ENCODE measurements at regions of chr19 and their contacts with region 1.

Region 1: DNA sequence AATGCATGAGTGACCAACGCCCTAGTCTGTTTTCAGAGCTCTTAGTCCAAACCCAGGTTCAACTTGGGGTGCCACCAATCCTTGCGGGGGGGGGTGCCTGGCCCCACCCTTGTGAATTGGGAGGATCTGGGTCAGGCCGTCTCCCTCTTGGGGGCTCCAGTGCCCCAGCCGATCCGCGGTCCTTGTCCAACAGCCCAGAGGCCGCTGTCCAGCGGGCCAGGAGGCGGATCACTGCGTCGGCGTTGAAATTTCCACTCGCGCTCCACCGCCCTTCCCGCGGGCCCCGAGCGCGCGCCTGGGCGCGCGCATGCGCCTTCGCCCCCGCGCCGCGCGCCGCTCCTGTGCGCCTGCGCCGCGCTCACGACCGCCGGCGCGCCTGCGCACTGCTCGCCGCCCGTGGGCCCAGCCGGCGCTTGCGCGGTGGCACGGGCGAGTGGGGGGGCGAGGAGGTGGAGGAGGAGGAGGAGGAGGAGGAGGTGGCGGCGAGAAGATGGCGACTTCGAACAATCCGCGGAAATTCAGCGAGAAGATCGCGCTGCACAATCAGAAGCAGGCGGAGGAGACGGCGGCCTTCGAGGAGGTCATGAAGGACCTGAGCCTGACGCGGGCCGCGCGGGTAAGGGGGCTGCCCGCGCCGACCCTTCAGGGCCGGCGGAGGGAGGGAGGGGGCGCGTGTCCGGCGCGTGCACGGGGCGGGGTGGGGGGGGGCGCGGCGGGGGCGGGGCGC is at the start of gene CRTC1:
- DNase-seq: peak; percentile 91 to 94
- ATAC-seq: peak; percentile 86 to 92 (median 90)
- H3K4me3 ChIP-seq: peak within 1 kb of the TSS; percentile 44 to 66 (median 57)
- H3K27ac ChIP-seq: peak within 1 kb of the TSS; percentile 44 to 90 (median 85)
- H3K4me1 ChIP-seq: peaks cover 7 to 37% (median 14%) of the 10 kb centered on the region in 9 donors
- H3K27me3 ChIP-seq: no peaks in the 10 kb centered on the region
- CTCF ChIP-seq: peak in 2 of 9 donors; percentile 16 to 23
- total RNA-seq, gene CRTC1: 6.5 to 11.8 (median 9.3) TPM

Region 2: DNA sequence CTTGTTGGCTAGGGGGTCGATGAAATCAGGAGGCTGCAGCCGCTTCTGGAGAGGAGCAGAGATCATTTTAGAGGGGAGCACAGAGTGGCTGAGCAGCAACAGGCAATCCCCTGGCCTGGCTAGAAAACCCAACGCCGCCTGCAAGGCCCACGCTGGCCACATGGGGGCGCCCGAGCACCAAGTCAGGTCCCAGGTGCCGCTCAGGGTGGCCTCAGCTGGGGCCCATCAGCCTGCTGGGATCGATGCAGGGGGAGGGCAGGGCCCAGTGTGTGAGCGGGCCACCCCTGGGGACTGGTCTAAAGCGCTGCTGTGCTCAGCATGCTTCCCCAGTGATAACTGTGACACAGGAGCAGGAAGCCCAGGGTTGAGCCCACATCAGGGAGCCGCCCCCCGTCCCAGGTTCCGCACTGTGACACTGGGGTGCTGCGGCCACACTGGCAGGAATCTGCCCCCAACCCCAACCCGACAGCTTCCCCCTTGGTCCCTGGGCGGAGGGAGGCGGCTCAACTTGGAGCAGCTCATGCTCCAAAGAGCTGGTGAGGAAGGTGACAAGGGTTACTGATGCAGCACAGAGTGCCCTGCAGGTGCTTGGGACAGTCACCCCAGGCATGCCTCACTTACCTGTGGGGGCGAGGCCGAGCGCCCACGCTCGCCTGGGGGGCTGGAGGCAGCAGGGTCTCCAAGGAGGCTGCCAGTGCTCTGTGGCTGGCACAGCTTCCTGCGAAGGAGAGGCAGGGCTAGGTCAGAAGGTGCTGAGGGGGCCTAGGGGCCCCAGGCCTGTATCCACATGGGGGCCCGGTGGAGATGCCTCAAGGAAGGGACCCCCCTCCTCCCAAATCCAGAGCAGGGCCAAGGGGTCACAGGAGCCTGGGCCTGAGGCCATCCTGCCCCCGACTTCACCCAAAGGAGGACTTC is 232.2 kb before region 1 on chr19:
- intact Hi-C with region 1: loop called in 3 of 10 experiments (anchors 10 kb)
- DNase-seq: peak; percentile 86 to 91
- ATAC-seq: peak; percentile 78 to 91 (median 86)
- H3K4me3 ChIP-seq: no peak overlapping the region
- H3K27ac ChIP-seq: no peak overlapping the region
- H3K4me1 ChIP-seq: peaks cover 0 to 17% (median 9%) of the 10 kb centered on the region in 9 donors
- H3K27me3 ChIP-seq: no peaks in the 10 kb centered on the region
- CTCF ChIP-seq: peak; percentile 97 to 99 (median 98)

Region 3: GRCh38 chr19:18589380-18590272 is 93.8 kb before region 1 on chr19:
- intact Hi-C with region 1: loop called in 4 of 10 experiments (anchors 5 to 10 kb)
- DNase-seq: peak; percentile 63 to 71
- ATAC-seq: peak; percentile 48 to 80 (median 69)
- H3K4me3 ChIP-seq: peak overlapping the region; percentile 63 to 95 (median 86)
- H3K27ac ChIP-seq: peak overlapping the region; percentile 55 to 97 (median 92)
- H3K4me1 ChIP-seq: peaks cover 3 to 55% (median 29%) of the 10 kb centered on the region in 9 donors
- H3K27me3 ChIP-seq: peaks cover 0 to 3% (median 0%) of the 10 kb centered on the region in 7 donors
- CTCF ChIP-seq: peak in 5 of 9 donors; percentile 8 to 41 (median 26)

Region 4: DNA sequence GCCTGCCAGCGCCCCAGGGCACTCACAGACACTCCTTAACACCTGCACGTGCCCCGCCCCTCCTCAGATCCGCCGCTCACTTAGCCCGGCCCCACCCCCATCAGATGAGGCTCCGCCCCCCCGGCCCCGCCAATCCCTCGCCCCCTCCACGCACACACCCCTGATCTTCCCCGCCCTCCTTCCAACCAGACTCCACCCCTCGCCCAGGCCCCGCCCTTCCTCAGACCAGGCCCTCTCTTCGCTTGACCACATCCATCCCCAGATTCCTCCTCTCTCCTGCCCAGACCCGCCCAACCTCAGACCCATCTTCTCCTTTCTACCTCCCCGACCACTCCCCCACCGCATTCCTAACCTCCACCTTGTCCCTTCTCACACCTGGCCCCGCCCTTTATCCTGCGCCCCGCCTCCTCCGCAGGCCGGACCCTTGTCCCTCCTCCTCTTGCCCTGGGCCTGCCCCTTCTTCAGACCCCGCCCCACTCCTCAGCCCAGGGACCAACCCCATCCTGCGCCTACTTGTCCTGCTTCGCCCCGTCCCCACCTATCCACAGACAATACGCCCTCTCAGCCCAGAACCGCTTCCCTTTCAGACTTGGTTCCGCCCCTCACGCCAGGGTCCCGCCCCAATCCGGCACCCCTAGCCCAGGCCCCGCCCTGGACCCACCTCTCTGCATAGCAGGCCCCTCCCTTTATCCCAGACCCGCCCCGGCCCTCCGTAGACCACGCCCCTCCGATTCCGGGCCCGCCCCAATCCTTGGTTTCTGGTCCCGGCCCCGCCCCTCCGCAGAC is 47.0 kb before region 1 on chr19:
- intact Hi-C with region 1: loop called in 1 of 10 experiments (anchors 2 kb)
- DNase-seq: peak; percentile 98 to 99
- ATAC-seq: peak; percentile 97 to 99 (median 98)
- H3K4me3 ChIP-seq: peak overlapping the region; percentile 55 to 80 (median 68)
- H3K27ac ChIP-seq: peak overlapping the region in 9 of 10 donors; percentile 62 to 89 (median 82)
- H3K4me1 ChIP-seq: peaks cover 0 to 27% (median 10%) of the 10 kb centered on the region in 9 donors
- H3K27me3 ChIP-seq: no peaks in the 10 kb centered on the region
- CTCF ChIP-seq: no peak

Region 5: DNA sequence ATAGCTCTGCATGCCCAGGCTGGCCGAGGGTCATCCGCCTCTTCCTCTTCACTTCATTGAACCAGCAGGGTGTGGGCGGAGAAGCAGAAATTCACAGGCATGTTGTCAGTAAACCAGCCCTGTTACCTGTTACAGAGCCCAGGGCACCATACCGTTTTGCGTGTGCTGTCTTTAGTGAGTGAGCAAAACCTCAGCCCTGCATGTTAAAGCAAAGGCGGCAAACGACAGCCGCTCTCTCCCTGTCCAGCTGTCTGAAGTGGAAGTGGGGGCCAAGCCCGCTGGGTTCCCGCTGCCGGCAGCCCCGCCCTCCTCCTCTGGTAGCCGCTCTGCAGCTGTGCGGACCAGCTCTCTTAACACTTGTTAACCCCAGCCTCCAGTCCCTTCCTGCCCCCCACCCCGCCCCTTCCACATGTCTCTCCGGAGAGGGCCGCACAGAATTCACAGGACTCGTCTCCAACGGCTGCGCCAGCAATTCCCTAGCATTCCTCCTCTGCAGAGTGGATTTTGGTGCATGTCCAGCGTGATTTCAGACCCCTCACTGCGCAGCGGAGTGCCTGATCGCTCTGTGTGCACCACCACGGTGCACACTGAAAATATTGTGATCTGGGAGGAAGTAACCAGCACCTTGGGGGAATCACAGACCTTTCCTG is 33.9 kb before region 1 on chr19:
- intact Hi-C with region 1: loop called in 1 of 10 experiments (anchors 2 kb)
- DNase-seq: peak; percentile 82 to 83
- ATAC-seq: peak; percentile 60 to 79 (median 74)
- H3K4me3 ChIP-seq: peak overlapping the region in 9 of 10 donors; percentile 14 to 40 (median 26)
- H3K27ac ChIP-seq: peak overlapping the region; percentile 70 to 97 (median 88)
- H3K4me1 ChIP-seq: peaks cover 15 to 59% (median 44%) of the 10 kb centered on the region in 9 donors
- H3K27me3 ChIP-seq: no peaks in the 10 kb centered on the region
- CTCF ChIP-seq: no peak

Region 6: GRCh38 chr19:18831524-18832305 is 148.3 kb after region 1 on chr19 and contains the start of gene UPF1:
- intact Hi-C with region 1: loop called in 5 of 10 experiments (anchors 5 to 10 kb)
- DNase-seq: peak; percentile 93 to 98
- ATAC-seq: peak; percentile 92 to 97 (median 96)
- H3K4me3 ChIP-seq: peak within 1 kb of the TSS; percentile 69 to 99 (median 90)
- H3K27ac ChIP-seq: peak within 1 kb of the TSS in 9 of 10 donors; percentile 84 to 96 (median 86)
- H3K4me1 ChIP-seq: peaks cover 13 to 49% (median 44%) of the 10 kb centered on the region in 9 donors
- H3K27me3 ChIP-seq: peaks cover 0 to 6% (median 0%) of the 10 kb centered on the region in 7 donors
- CTCF ChIP-seq: peak in 3 of 9 donors; percentile 9 to 24 (median 18)
- total RNA-seq, gene UPF1: 32.3 to 44.3 (median 37.5) TPM

Region 7: DNA sequence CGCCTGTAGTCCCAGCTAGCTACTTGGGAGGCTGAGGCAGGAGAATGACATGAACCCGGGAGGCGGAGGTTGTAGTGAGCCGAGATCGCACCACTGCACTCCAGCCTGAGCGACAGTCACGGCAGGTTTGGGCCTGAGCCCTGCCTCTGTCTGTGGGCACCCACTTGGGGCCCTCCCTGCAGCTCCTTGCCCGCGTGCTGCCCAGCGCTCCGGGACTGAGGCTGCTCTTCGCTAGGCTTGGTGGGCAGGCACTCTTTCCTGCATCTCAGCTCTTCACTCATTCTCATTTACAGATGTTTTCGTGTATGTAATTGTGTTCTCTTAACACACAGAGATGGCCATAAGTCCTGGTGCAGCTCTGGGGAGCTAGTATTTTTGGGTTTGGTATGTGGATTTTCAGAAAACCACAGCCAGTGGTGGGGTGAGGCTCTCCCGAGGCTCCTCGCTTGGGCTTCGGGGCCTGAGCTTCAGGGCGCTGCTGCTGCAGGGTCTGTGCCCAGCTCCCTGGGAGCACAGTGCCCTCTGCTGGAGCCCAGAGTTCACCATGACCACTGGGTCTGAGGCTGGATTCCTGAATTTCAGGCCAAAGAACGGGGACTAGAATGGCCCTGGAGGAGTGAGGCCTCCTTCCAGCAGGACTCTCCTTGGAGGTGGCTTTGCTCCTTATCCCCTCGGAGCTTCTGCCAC is 163.6 kb after region 1 on chr19:
- intact Hi-C with region 1: loop called in 2 of 10 experiments (anchors 1 to 5 kb)
- DNase-seq: peak; percentile 77 to 83
- ATAC-seq: peak; percentile 70 to 79 (median 75)
- H3K4me3 ChIP-seq: no peak overlapping the region
- H3K27ac ChIP-seq: peak overlapping the region in 8 of 10 donors; percentile 58 to 92 (median 86)
- H3K4me1 ChIP-seq: peaks cover 29 to 94% (median 76%) of the 10 kb centered on the region in 9 donors
- H3K27me3 ChIP-seq: no peaks in the 10 kb centered on the region
- CTCF ChIP-seq: peak; percentile 65 to 93 (median 89)